Lower leg skin (tissue), 4 donors: ENCODE measurements at regions of chr16 and their contacts with region 1.

Region 1: DNA sequence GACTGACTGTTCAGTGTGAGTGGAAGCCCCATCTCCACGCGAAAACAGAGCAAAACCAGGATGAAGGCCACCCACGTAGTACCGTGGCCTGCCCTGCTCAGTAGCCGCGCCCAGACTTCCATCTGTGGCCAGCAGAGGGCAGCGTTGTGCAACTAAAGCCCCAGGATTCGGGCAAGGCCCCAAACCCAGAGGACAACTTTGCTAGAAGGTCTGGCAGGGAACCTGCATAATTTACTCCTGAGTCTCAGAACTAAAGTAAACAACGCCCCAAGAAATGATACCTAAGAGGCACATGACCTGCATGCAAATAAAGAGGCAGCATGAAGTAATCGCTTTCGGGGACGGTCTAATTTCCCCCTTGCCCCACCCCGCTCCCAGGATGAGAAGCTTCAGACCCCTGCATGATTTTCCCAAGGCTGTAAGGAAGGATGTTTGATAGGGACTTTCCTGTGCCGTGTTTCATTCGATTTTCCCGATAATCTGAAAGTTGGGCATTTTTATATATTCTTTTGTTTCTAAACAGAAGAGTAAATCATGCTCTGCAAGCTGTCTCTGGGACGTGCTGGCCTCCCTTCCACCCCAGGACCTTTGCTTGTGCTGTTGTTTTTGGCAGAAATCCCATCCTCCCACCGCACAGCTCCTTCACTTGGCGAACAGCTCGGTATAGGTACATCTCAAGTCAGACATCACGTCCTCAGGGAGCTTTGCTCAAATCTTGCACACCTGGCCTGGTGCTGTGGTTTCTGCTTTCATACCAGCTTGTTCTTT is 18.6 kb downstream of the HSBP1 start:
- DNase-seq: peak; percentile 87 to 97
- H3K4me3 ChIP-seq: no peak overlapping the region
- CTCF ChIP-seq: peak in 1 of 3 donors; percentile 69
- POLR2A ChIP-seq: no peak

Region 2: DNA sequence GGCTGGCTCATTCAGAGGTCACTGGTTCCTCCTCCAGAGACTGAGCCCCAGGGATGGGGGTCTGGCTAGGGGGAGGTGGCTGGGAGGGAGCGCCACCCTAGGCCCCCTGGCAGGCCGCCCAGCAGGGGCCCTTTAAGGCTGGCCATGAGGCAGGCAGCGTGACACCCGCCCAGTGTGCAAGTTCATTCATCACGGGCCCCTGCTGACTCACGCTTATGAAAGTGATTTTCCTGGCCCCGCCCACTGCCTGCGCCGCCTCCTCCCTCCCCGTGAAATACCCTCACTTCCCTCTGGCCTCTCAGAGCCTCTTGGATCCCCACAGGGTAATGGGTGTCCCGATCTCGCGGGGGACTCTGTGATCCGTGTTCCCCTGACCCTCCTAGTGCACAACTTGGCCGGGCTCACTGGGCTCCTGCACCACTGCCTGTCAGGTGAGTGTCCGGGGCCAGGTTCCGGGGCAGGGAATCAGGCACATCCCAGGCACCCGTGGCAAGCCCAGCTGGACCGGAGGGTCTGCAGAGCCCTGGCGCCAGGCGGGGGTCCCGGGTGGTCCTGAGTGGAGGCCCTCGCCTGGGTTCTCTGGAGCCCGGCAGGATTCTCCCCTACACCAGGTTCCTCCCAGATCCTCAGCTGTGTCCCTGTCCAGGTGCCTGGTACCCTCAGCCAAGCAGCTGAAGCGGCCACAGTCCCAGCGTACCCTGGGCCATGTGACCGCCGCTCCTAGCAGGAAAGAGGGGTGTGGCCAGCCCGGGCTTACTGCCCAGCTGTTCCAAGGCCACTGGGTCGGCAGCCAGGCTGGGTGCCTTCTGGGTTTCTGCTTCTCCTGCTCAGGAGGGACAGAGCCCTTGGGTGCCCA is 126.8 kb after region 1 on chr16 and contains the start of gene OSGIN1:
- intact Hi-C with region 1: loop called (anchors 5 kb)
- DNase-seq: peak; percentile 96 to 99
- H3K4me3 ChIP-seq: peak within 1 kb of the TSS; percentile 34
- CTCF ChIP-seq: no peak
- POLR2A ChIP-seq: no peak
- total RNA-seq, gene OSGIN1: 1.1 to 3.2 (median 2.4) TPM

Region 3: DNA sequence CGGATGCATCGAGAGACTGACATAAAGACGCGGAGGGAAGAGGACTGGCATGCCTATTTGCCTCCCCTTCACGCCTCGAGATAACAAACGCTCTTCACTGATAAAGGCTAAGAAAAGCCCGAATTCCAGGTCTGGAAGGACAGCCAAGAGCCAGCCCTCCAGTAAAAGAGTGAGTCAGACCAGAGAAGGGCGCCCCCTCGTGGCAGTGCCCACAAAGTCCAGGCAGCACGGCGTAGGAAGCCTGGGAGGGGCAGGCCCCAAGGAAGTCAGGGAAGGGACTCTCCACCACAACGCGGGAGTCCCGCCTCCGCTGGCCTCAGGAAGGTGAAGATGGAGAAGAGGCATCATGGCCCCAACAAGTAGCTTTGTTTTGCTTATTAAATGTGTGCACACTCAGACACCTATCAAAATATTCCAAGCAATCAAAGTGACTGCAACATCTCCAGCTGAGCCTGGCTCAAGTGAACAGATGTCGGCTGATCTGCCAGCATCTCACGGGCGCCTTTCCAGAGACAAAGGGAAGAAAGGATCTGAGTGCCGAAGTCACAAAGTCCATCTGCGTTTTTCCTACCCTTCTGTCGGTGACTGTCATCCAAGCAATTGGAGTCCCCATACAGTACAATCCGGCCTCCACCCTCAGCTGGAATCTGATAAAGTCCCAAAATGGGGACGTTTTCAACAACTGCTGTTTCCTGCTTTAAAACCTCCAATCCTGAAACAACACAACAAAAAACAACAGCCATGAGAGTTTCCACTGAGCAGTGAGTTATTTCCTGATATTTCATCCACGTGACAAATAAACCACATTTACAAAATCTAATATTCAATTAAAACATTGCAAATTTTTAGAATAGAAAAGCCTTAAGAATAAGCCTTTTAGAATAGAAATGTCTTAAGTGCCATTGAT is 236.7 kb after region 1 on chr16:
- intact Hi-C with region 1: loop called (anchors 10 kb)
- DNase-seq: peak; percentile 42 to 92
- H3K4me3 ChIP-seq: no peak overlapping the region
- CTCF ChIP-seq: peak in 1 of 3 donors; percentile 43
- POLR2A ChIP-seq: no peak

Region 4: GRCh38 chr16:84103678-84104077 is 277.3 kb after region 1 on chr16:
- intact Hi-C with region 1: no loop called
- DNase-seq: no peak
- H3K4me3 ChIP-seq: no peak overlapping the region
- CTCF ChIP-seq: no peak
- POLR2A ChIP-seq: no peak

Region 5: DNA sequence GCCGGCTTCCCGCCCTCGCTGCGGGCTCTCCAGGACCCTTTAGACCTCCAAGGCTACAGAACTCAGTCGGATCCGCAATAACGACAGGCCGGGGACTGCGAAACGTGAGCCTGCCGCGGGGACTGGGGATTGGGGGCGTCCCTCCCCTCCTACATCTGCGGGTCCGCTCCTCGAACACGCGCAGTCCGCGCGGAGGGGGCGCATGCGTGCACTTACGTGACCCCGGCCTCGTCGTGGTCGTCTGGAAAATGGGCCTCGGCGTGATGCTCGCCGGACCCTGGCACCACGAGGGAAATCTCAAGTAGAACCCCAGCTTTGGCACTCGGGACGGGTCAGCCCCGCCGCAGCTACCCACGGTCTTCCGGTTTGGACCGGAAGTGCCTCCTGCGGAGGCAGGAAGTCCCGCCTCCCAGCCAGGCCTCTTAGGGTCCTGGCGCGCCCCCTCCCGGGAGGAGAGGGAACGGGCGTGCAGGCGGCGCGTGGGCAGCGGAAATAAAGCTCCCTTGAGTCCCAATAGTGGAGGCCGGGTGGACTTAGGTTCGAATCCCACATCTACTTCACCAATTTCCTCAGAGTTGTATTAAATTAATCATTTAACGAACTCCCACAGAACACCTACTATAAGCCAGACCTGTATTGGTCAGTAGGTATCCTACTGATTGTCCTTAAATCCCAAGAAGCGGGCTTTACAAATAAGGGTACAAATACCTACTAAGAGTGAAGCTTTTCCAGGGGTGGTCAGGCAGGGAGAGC is 360.5 kb after region 1 on chr16 and contains the start of gene TAF1C:
- intact Hi-C with region 1: loop called (anchors 10 kb)
- DNase-seq: peak; percentile 90 to 98
- H3K4me3 ChIP-seq: peak within 1 kb of the TSS; percentile 93
- CTCF ChIP-seq: peak in 1 of 3 donors; percentile 70
- POLR2A ChIP-seq: no peak
- total RNA-seq, gene TAF1C: 35.8 to 41.8 (median 36.5) TPM